ENCODE measurements at regions of chr7 and their contacts with region 1.

Region 1: DNA sequence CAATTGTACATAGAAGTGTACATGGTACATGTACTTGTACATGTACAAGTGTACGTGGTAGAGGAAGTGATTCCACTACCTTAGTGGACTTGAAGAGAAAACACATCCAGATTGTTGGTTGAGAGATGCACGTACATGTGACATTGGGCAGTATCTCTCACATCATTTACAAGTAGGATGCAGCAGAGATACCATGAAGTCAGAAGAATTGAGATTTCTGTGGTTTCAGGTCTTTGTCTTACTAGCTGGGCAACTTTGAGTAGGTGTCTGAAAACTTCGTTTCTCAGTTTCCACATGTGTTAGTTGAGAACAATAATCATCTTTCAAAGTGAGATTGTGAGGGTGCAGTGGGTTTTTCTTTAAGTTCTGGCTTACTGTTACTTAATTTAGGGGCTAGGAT is 21.5 kb downstream of the CLDN12 start:
- DNase-seq: no peak
- H3K4me3 ChIP-seq: no peak overlapping the region
- H3K27ac ChIP-seq: no peak overlapping the region
- H3K27me3 ChIP-seq: no peaks in the 10 kb centered on the region
- CTCF ChIP-seq: no peak

Region 2: GRCh38 chr7:90312745-90313144 is 112.0 kb before region 1 on chr7:
- CTCF ChIA-PET with region 1: interaction called, 31 read pairs
- POLR2A ChIA-PET with region 1: no interaction called
- DNase-seq: no peak
- H3K4me3 ChIP-seq: no peak overlapping the region
- H3K27ac ChIP-seq: no peak overlapping the region
- H3K27me3 ChIP-seq: no peaks in the 10 kb centered on the region
- CTCF ChIP-seq: peak; percentile 28; the same call in 1 of the 2 replicates

Region 3: DNA sequence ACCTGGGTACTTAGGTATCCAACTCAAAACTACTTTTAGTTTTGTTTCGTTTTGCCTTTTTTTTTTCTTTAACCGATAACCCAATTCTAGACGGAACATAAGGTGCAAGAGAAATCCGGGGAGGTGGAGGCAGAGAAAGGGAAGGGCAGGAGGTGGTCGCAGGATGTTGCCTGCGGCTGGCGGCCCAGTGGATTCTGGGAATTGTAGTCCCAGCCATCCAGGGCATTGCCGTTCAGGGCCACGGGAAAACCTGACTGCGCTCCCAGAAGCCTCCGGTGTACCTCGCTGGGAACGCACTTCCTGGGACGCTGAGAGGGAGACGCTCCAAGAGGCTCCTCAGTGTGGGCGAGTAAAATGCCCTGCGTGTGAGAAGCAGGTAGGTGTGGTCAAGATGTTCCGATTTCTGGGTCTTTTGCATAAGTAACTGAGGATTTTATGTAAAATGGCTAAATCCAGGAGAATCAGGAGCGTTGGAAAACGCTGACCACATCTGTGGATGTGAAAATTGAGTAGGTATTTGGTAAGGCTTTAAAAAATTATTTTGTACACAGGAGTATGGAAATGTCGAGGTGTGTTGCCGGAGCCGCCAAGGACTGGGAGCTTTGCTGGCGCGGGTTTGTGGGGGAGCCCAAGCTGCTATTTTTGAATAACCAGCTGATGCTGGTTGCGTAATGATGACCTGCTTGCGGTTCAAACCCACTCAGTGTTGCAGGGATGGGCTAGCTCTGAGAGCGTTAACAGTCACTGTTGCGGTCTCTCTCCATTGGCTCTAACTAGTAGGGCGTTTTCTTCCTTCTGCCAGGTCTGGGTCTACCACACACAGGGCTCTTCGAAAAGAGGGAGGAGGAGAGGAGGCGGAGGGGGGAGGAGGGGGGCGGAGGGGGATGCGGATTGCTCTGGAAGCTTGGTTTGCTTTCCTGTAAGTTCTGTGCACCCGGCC is 21.3 kb before region 1 on chr7 and contains the start of gene CLDN12:
- CTCF ChIA-PET with region 1: interaction called, 10 read pairs
- POLR2A ChIA-PET with region 1: no interaction called
- DNase-seq: peak; percentile 92
- H3K4me3 ChIP-seq: peak within 1 kb of the TSS; percentile 85
- H3K27ac ChIP-seq: peak within 1 kb of the TSS; percentile 97
- H3K27me3 ChIP-seq: no peaks in the 10 kb centered on the region
- CTCF ChIP-seq: no peak
- polyA plus RNA-seq, gene CLDN12: 41.4 and 41.6 TPM in 2 replicates

Region 4: DNA sequence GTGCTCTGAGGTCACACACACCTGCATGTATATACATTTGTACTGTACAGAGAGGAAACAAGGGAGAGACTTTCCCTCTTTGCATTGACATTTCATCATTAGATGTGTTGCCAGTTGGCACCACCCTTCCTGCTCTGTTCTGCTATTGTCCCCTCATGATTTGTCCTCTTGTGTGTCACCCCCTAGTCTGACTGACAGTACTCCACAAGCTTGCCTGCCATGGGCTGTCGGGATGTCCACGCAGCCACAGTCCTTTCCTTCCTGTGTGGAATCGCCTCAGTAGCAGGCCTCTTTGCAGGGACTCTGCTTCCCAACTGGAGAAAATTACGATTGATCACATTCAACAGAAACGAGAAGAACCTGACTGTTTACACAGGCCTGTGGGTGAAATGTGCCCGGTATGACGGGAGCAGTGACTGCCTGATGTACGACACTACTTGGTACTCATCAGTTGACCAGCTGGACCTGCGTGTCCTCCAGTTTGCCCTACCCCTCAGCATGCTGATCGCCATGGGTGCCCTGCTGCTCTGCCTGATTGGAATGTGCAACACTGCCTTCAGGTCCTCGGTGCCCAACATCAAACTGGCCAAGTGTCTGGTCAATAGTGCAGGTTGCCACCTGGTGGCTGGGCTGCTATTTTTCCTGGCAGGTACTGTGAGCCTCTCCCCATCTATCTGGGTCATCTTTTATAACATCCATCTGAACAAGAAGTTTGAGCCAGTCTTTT is 12.1 kb before region 1 on chr7:
- CTCF ChIA-PET with region 1: interaction called, 27 read pairs
- POLR2A ChIA-PET with region 1: no interaction called
- DNase-seq: no peak
- H3K4me3 ChIP-seq: no peak overlapping the region
- H3K27ac ChIP-seq: no peak overlapping the region
- H3K27me3 ChIP-seq: no peaks in the 10 kb centered on the region
- CTCF ChIP-seq: 0 out of 2 replicates have a peak, but pooled peaks have one; percentile 10

Region 5: GRCh38 chr7:90613088-90613498 is 188.4 kb after region 1 on chr7:
- CTCF ChIA-PET with region 1: no interaction called
- POLR2A ChIA-PET with region 1: no interaction called
- DNase-seq: no peak
- H3K4me3 ChIP-seq: no peak overlapping the region
- H3K27ac ChIP-seq: no peak overlapping the region
- H3K27me3 ChIP-seq: no peaks in the 10 kb centered on the region
- CTCF ChIP-seq: no peak